ENCODE measurements at regions of chr10 and their contacts with region 1.

Region 1: GRCh38 chr10:15585303-15585715 is 134.4 kb downstream of the ITGA8 start:
- ATAC-seq: peak in 7 of 8 experiments; percentile 53 to 99 (median 91)
- H3K4me3 ChIP-seq: no peak overlapping the region
- H3K27ac ChIP-seq: no peak overlapping the region
- H3K4me1 ChIP-seq: peaks cover 0 to 4% of the 10 kb centered on the region in 2 donors

Region 2: DNA sequence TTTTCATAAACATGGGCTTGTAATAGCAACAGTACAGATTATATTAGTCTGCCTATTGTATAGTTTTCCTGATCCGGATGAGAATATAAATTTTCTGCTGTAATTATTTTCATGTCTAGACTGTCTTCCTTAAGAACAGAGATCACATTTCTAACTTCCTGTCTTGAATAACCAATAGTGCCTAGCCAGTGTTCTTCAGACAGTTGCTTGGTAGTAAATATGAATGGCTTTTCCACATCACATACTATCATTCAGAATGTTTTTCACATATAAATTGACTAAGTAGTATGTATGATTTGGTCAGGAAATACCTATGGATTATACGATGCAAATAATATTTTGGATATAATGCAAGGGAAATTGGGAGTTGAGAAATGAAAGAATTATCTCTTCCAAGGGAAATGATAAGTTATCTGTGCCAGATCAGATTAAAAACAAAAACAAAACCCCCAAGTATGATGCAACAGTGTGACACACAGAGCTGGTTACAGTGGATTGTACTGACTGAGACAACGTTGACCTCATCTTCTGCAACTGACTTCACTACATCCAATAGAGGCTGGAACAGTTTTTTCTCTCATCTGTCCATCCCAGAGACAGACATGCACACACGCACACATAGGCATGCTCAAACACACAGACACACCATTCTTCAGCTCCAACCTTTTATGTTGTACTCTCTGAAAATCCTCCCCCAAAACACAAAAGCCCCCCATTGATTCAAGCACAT is 118.0 kb after region 1 on chr10:
- in situ Hi-C with region 1: no loop called
- ATAC-seq: peak in 5 of 8 experiments; percentile 61 to 100 (median 97)
- H3K4me3 ChIP-seq: no peak overlapping the region
- H3K27ac ChIP-seq: peak overlapping the region; percentile 52 to 63
- H3K4me1 ChIP-seq: peaks cover 4 to 9% of the 10 kb centered on the region in 2 donors

Region 3: DNA sequence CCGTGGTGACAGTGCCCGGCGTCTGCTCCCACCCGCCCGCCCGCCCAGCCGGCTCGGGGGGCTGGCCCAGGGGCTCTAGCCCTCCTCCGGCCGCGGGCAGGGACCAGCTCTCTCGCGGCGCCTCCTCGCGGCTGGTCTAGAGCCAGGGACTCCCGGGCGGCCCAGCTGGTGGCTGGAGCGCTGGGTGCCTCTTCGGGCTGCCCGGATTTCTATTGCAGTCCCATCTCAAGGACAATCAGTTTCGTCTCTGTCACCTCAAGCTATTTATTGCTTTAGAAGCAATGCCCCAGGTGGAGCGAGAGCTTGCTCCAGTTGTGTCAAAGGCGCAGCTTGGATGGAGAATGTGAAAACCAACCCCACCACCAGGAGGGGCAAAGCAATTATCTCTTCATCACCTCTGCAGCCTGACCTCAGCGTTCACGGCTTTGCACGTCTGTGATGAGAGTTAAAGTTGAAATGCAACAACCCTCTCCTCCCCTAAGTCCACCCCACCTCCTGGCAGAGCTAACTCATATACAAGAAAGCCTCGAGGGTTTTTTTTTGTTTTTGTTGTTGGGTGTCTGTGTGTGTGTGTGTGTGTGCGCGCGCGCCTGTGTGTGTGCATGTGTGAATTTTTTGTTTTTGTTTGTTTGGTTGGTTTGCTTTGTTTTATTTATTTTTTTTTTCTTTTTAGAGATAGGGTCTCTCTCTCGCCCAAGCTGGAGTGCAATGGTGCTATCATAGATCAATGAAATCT is 134.8 kb after region 1 on chr10 and contains the start of gene ITGA8:
- in situ Hi-C with region 1: loop called in 1 of 9 experiments (anchors 10 kb)
- ATAC-seq: peak; percentile 44 to 90 (median 86)
- H3K4me3 ChIP-seq: peak within 1 kb of the TSS; percentile 41 to 59 (median 49)
- H3K27ac ChIP-seq: no peak within 1 kb of the TSS
- H3K4me1 ChIP-seq: peaks cover 0 to 5% of the 10 kb centered on the region in 2 donors
- total RNA-seq, gene ITGA8: 0.33 to 19.0 (median 1.3) TPM

Region 4: DNA sequence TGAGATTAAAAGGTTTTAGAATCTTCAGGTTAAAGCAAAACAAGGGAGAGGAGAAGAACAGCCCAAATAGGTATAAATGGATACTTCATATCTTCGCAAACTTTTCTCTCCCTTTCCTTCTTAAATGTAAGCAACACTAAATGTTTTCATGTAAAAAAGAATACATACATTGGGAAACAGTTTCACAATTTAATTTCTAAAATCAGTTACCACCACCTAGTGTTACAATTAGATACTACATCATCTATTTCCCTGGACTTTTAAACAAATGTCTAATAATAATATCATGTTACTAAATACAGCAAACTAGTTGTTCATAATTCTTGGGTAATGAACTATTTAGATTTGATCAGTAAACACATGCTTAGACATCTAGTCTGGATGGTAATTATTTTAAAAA is 239.2 kb after region 1 on chr10:
- in situ Hi-C with region 1: loop called in 1 of 9 experiments (anchors 25 kb)
- ATAC-seq: no peak
- H3K4me3 ChIP-seq: no peak overlapping the region
- H3K27ac ChIP-seq: no peak overlapping the region
- H3K4me1 ChIP-seq: no peaks in the 10 kb centered on the region